Activated T-helper 2 cell treated with anti-CD3 and anti-CD28 coated beads, Interferon-gamma antibody, Interleukin-2, Interleukin-4, amounts not matched to agents 10 μg/mL and 5 μg/mL and 100 μg/mL, durations not matched to agents 14 hours and 24 hours and 36 hours (primary cell): ENCODE measurements at regions of chr5 and their contacts with region 1.

Region 1: GRCh38 chr5:176647030-176647866 is at the start of gene TSPAN17:
- DNase-seq: peak; percentile 99
- H3K4me3 Mint-ChIP-seq: peak within 1 kb of the TSS; percentile 82
- H3K27ac Mint-ChIP-seq: peak within 1 kb of the TSS; percentile 86
- H3K4me1 Mint-ChIP-seq: peaks cover 35% of the 10 kb centered on the region
- H3K27me3 Mint-ChIP-seq: no peaks in the 10 kb centered on the region
- total RNA-seq, gene TSPAN17: 32.7 and 33.9 TPM in 2 replicates

Region 2: GRCh38 chr5:176560364-176560763 is 86.9 kb before region 1 on chr5:
- intact Hi-C with region 1: no loop called
- DNase-seq: no peak
- H3K4me3 Mint-ChIP-seq: no peak overlapping the region
- H3K27ac Mint-ChIP-seq: no peak overlapping the region
- H3K4me1 Mint-ChIP-seq: peaks cover 14% of the 10 kb centered on the region
- H3K27me3 Mint-ChIP-seq: peaks cover 7% of the 10 kb centered on the region

Region 3: DNA sequence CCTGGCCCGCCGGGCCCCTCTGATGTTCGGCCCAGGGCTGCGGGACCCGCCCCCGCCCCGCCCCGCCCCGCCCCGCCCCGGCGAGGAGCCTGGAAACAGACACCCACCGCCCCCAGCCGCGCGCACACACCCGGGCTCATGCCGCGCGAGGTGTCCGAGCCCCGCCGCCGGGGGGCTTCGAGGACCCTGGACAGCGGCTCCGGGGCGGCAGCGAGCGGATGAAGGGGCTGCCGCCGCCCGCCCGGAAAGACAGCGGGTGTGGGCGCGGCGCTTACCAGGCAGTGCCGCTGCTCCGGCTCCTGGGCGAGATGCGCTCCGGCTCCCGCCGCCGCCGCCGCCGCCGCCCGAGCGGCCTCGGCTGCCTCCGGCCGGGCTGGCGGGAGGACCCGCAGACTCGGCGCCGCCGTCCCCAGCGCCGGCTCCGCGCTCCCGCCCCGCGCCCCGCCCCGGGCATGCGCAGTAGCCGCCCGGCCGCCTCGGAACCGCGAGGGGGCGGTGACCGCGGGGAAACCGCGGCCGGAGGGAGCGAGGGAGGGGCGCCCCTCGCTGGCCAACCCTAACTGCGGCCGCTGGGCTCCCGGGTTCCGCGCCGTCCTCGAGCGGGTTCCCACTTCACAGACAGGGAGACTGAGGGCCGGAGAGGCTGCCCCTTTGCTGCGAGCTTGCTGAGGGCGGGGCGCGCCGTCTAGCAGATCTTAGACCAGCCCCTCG is 37.4 kb before region 1 on chr5 and contains the start of gene GPRIN1:
- intact Hi-C with region 1: loop called (anchors 5 kb)
- DNase-seq: peak; percentile 63
- H3K4me3 Mint-ChIP-seq: peak within 1 kb of the TSS; percentile 92
- H3K27ac Mint-ChIP-seq: peak within 1 kb of the TSS; percentile 76
- H3K4me1 Mint-ChIP-seq: peaks cover 13% of the 10 kb centered on the region
- H3K27me3 Mint-ChIP-seq: peaks cover 33% of the 10 kb centered on the region
- total RNA-seq, gene GPRIN1: 3.0 and 3.6 TPM in 2 replicates

Region 4: DNA sequence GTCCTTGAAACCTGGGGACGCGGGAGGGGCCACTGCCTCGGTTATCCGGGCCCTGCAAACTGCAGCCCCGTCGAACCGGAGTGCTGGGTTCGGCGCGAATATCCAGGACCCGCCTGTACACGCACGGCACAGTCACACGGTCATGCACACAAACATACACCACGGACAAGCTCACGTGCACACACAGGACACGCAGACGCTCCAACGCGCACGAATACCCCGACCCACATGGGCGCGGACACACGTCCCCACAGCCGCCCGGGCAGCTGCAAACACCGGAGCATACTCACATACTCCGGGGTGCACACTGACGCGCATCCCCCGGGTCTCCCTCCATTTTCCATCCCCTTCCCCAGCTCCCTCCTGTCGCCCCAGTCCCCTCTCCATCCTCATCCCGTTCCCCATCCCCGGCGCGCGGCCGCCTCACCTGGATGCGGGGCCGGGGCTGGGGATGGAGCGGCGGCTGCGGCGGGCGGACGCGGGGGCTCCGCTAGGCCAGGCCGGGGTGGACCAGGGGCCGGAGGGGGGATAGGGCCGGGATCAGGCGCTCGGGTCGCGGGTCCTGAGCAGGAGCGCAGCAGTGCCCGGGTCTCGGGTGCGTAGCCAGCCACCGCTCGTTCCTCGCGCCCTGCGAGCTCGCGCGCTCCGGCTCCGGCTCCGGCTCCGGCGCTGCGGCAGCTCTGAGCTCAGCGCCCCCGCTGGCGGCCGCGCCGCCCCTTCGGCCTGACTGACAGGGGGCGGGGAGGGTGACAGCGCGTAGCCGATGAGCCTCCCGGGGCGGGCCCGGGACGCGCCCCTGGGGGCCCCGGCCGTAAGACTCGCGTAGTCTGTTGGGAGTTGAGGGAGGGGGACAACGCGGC is 17.2 kb before region 1 on chr5 and contains the starts of genes EIF4E1B and SNCB:
- intact Hi-C with region 1: loop called (anchors 2 kb)
- DNase-seq: peak; percentile 37
- H3K4me3 Mint-ChIP-seq: peak within 1 kb of the TSS; percentile 3
- H3K27ac Mint-ChIP-seq: no peak within 1 kb of the TSS
- H3K4me1 Mint-ChIP-seq: peaks cover 12% of the 10 kb centered on the region
- H3K27me3 Mint-ChIP-seq: peaks cover 74% of the 10 kb centered on the region
- total RNA-seq, gene EIF4E1B: not detected in 2 replicates
- total RNA-seq, gene SNCB: not detected in 2 replicates